CD8-positive, alpha-beta T cell (primary cell): ENCODE measurements at regions of chr11 and their contacts with region 1.

Region 1: DNA sequence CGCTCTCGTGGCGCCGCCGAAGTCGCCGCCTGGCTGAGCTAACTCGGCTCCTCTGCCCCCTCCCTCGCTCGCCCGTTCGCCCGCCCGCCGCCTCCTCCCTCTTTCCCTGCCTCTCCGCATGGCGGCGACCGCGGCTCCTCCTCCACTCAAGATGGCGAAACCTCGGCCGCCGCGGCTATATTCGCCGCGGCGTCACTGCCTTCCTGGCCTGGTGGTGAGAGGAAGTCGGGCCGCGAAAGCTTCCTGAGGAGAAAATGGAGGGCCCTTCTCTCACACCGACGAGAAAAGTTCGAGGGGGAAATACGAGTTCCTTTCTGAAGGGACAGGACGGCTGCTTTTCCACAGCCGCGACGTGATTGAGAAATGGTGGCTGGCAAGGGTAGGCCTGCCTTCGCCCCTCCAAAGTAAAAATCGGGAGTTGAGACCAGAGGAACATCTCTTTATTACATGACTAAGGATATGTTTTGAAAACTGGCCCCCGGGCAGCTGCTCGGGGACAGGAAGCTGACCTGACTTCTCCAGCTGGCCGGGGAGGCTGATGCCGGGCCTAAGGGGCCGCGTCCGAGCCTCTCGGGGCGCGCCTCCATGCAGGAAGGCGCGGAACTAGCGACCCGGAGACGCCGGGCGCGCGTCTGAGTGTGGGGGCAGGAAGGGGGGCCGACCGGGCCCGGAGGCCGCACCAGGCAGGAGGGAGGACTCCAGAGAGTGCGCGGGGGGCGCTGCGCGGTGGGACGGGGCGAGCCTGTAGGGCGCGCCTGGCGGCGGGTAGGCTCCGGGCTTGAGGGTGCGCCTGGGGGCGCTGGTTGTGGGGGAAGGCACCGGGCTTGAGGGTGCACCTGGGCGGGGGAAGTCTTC is at the start of gene DDX6:
- DNase-seq: peak; percentile 81 to 95 (median 93)
- ATAC-seq: peak; percentile 65
- H3K4me3 ChIP-seq: peak within 1 kb of the TSS; percentile 71 to 94
- H3K4me3 Mint-ChIP-seq: peak within 1 kb of the TSS; percentile 100
- H3K27ac ChIP-seq: peak within 1 kb of the TSS; percentile 98
- H3K27ac Mint-ChIP-seq: peak within 1 kb of the TSS; percentile 99
- H3K4me1 ChIP-seq: peaks cover 27% of the 10 kb centered on the region
- H3K4me1 Mint-ChIP-seq: peaks cover 36% of the 10 kb centered on the region
- H3K27me3 ChIP-seq: no peaks in the 10 kb centered on the region
- H3K27me3 Mint-ChIP-seq: no peaks in the 10 kb centered on the region
- CTCF ChIP-seq: peak; percentile 18
- total RNA-seq, gene DDX6: 409 TPM

Region 2: DNA sequence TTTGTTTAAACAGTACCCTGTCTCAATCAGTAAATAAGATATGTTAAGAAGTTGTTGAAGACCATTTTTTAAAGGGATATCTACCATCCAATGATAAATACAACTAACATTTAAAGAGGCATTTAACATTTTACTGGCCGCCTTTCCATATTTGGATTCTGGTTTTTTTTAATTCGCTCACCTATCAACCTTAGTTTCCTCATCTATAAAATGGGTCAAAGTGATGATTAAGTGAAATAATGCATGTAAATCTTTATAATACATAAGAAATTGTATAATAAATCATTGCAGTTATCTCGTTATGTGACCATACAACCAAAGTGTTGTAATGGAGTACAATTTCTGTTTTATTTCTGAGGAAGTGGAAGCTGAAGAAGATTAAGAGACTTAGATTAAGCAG is 407.7 kb before region 1 on chr11:
- CTCF ChIA-PET with region 1: no interaction called
- POLR2A ChIA-PET with region 1: no interaction called
- intact Hi-C with region 1: no loop called
- DNase-seq: no peak
- ATAC-seq: no peak
- H3K4me3 ChIP-seq: no peak overlapping the region
- H3K4me3 Mint-ChIP-seq: no peak overlapping the region
- H3K27ac ChIP-seq: no peak overlapping the region
- H3K27ac Mint-ChIP-seq: no peak overlapping the region
- H3K4me1 ChIP-seq: no peaks in the 10 kb centered on the region
- H3K4me1 Mint-ChIP-seq: no peaks in the 10 kb centered on the region
- H3K27me3 ChIP-seq: no peaks in the 10 kb centered on the region
- H3K27me3 Mint-ChIP-seq: no peaks in the 10 kb centered on the region
- CTCF ChIP-seq: no peak

Region 3: DNA sequence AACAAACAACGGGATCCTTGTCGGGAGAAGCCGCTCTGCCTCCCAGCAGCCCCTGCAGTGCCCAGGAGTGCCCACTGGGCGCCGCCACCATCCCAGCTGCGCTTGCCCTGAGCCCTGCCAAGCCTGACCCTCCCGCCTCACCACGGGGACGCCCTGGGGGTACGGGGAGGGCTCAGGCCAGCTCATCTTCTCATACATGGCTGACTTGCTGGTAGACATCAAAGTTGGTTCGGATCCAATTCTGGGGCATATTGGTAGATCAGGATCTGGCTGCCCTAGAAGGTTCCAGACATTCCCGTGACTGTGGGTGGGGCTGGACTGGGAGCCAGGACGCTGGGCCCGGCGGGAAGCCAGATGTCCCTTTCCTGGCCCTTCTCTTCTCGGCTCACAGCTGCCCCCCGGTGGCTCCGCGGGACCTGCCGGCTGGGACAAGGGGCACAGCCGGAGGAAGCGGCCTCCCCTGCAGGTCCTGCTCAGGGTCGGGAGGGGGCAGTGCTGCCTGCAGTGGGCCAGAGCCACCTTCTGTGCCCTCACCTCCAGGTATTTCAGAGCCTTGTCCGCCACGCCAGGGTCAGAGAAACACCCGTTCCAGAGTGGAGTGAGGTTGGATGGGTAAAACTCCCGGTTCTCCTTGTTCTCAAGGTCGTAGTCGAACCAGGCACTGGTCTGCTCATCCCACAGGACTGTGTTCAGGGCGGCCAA is 101.3 kb before region 1 on chr11:
- CTCF ChIA-PET with region 1: interaction called, 124 read pairs
- POLR2A ChIA-PET with region 1: interaction called, 65 read pairs
- intact Hi-C with region 1: loop called in 1 of 2 experiments (anchors 1 kb)
- DNase-seq: peak; percentile 67 to 92 (median 89)
- ATAC-seq: peak; percentile 85
- H3K4me3 ChIP-seq: peak overlapping the region; percentile 45 to 83
- H3K4me3 Mint-ChIP-seq: peak overlapping the region; percentile 74
- H3K27ac ChIP-seq: peak overlapping the region; percentile 40 to 51
- H3K27ac Mint-ChIP-seq: peak overlapping the region; percentile 87
- H3K4me1 ChIP-seq: peaks cover 54% of the 10 kb centered on the region
- H3K4me1 Mint-ChIP-seq: peaks cover 58% of the 10 kb centered on the region
- H3K27me3 ChIP-seq: no peaks in the 10 kb centered on the region
- H3K27me3 Mint-ChIP-seq: no peaks in the 10 kb centered on the region
- CTCF ChIP-seq: peak; percentile 98

Region 4: DNA sequence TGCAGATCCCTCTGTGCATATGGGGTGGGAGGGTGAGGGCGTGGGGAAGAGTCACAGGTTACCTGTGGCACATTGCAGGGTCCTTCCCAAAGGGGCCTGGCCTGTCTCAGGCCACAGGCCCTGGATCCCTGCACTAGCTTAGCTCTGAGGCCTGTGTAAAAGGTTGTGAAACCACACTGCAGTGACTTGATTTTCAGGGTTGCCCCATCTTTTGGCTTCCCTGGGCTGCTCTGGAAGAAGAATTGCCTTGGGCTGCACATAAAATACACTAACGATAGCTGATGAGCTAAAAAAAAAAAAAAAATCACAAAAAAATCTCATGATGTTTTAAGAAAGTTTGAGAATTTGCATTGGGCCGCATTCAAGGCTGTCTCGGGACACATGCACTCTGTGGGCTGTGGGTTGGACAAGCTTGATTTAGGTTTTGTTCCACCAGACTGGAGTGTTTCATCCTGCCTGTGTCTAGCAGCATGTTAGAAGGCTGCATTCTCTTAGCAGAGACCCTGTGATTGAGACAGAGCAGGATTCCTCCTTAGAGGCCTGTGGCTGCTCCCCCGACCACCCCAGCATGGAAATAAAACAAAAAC is 76.0 kb before region 1 on chr11:
- CTCF ChIA-PET with region 1: no interaction called
- POLR2A ChIA-PET with region 1: no interaction called
- intact Hi-C with region 1: no loop called
- DNase-seq: no peak
- ATAC-seq: no peak
- H3K4me3 ChIP-seq: no peak overlapping the region
- H3K4me3 Mint-ChIP-seq: no peak overlapping the region
- H3K27ac ChIP-seq: no peak overlapping the region
- H3K27ac Mint-ChIP-seq: no peak overlapping the region
- H3K4me1 ChIP-seq: no peaks in the 10 kb centered on the region
- H3K4me1 Mint-ChIP-seq: peaks cover 6% of the 10 kb centered on the region
- H3K27me3 ChIP-seq: no peaks in the 10 kb centered on the region
- H3K27me3 Mint-ChIP-seq: no peaks in the 10 kb centered on the region
- CTCF ChIP-seq: no peak

Region 5: GRCh38 chr11:118752654-118753053 is 38.7 kb before region 1 on chr11:
- CTCF ChIA-PET with region 1: interaction called, 3 read pairs
- POLR2A ChIA-PET with region 1: no interaction called
- intact Hi-C with region 1: loop called in 1 of 2 experiments (anchors 5 kb)
- DNase-seq: no peak
- ATAC-seq: no peak
- H3K4me3 ChIP-seq: no peak overlapping the region
- H3K4me3 Mint-ChIP-seq: no peak overlapping the region
- H3K27ac ChIP-seq: no peak overlapping the region
- H3K27ac Mint-ChIP-seq: no peak overlapping the region
- H3K4me1 ChIP-seq: no peaks in the 10 kb centered on the region
- H3K4me1 Mint-ChIP-seq: peaks cover 35% of the 10 kb centered on the region
- H3K27me3 ChIP-seq: no peaks in the 10 kb centered on the region
- H3K27me3 Mint-ChIP-seq: no peaks in the 10 kb centered on the region
- CTCF ChIP-seq: no peak

Region 6: DNA sequence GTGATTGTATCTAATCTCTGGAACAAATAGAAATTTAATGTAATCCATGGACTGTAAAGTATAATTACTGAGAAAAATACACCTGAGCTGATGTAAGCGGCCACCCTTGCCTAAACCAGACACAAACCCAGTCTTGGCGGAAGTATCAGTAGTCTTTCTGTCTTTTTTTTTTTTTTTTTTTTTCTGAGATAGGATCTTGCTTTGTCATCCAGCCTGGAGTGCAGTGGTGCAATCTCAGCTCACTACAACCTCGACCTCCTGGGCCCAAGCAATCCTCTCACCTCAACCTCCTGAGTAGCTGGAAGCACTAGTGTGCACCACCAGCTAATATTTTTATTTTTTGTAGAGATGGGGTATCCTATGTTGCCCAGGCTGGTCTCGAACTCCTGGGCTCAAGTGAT is 86.8 kb after region 1 on chr11:
- CTCF ChIA-PET with region 1: interaction called, 50 read pairs
- POLR2A ChIA-PET with region 1: interaction called, 110 read pairs
- intact Hi-C with region 1: loop called in 1 of 2 experiments (anchors 2 kb)
- DNase-seq: peak in 3 of 9 experiments; percentile 50 to 69 (median 52)
- ATAC-seq: peak; percentile 15
- H3K4me3 ChIP-seq: no peak overlapping the region
- H3K4me3 Mint-ChIP-seq: peak overlapping the region; percentile 45
- H3K27ac ChIP-seq: peak overlapping the region; percentile 64 to 81
- H3K27ac Mint-ChIP-seq: peak overlapping the region; percentile 97
- H3K4me1 ChIP-seq: peaks cover 74% of the 10 kb centered on the region
- H3K4me1 Mint-ChIP-seq: peaks cover 89% of the 10 kb centered on the region
- H3K27me3 ChIP-seq: no peaks in the 10 kb centered on the region
- H3K27me3 Mint-ChIP-seq: no peaks in the 10 kb centered on the region
- CTCF ChIP-seq: no peak

Region 7: GRCh38 chr11:118907051-118908042 is 116.0 kb after region 1 on chr11:
- CTCF ChIA-PET with region 1: interaction called, 92 read pairs
- POLR2A ChIA-PET with region 1: interaction called, 144 read pairs
- intact Hi-C with region 1: no loop called
- DNase-seq: peak; percentile 79 to 94 (median 87)
- ATAC-seq: peak; percentile 41
- H3K4me3 ChIP-seq: no peak overlapping the region
- H3K4me3 Mint-ChIP-seq: peak overlapping the region; percentile 53
- H3K27ac ChIP-seq: peak overlapping the region; percentile 2 to 61
- H3K27ac Mint-ChIP-seq: peak overlapping the region; percentile 92
- H3K4me1 ChIP-seq: peaks cover 58% of the 10 kb centered on the region
- H3K4me1 Mint-ChIP-seq: peaks cover 58% of the 10 kb centered on the region
- H3K27me3 ChIP-seq: no peaks in the 10 kb centered on the region
- H3K27me3 Mint-ChIP-seq: no peaks in the 10 kb centered on the region
- CTCF ChIP-seq: peak; percentile 91

Region 8: GRCh38 chr11:119018074-119018938 is 227.0 kb after region 1 on chr11 and contains the starts of genes RPS25 and TRAPPC4:
- CTCF ChIA-PET with region 1: no interaction called
- POLR2A ChIA-PET with region 1: interaction called, 4 read pairs
- intact Hi-C with region 1: loop called in 1 of 2 experiments (anchors 2 kb)
- DNase-seq: peak; percentile 90 to 99 (median 95)
- ATAC-seq: peak; percentile 86
- H3K4me3 ChIP-seq: peak within 1 kb of the TSS; percentile 98
- H3K4me3 Mint-ChIP-seq: peak within 1 kb of the TSS; percentile 99
- H3K27ac ChIP-seq: peak within 1 kb of the TSS; percentile 98 to 99
- H3K27ac Mint-ChIP-seq: peak within 1 kb of the TSS; percentile 99
- H3K4me1 ChIP-seq: peaks cover 44% of the 10 kb centered on the region
- H3K4me1 Mint-ChIP-seq: peaks cover 55% of the 10 kb centered on the region
- H3K27me3 ChIP-seq: no peaks in the 10 kb centered on the region
- H3K27me3 Mint-ChIP-seq: no peaks in the 10 kb centered on the region
- CTCF ChIP-seq: no peak
- total RNA-seq, gene RPS25: 2,737 to 2,869 TPM
- total RNA-seq, gene TRAPPC4: 65.6 to 73.3 TPM